ENCODE measurements at regions of chr16 and their contacts with region 1.

Region 1: GRCh38 chr16:23966597-23967394 is 131.0 kb downstream of the PRKCB start:
- DNase-seq: peak in 2 of 4 experiments; percentile 43 to 80
- ATAC-seq: peak; percentile 68
- H3K4me3 ChIP-seq: no peak overlapping the region
- H3K27ac ChIP-seq: peak overlapping the region; percentile 34; the same call in 1 of the 3 replicates
- H3K4me1 ChIP-seq: peaks cover 0 to 19% of the 10 kb centered on the region in 2 experiments; a peak in 4 of 5 replicates
- H3K27me3 ChIP-seq: no peaks in the 10 kb centered on the region
- CTCF ChIP-seq: peak in 1 of 3 experiments; percentile 17; a peak in 2 of 6 replicates
- EP300 ChIP-seq: no peak
- POLR2A ChIP-seq: no peak
- RAD21 ChIP-seq: 0 out of 4 replicates have a peak, but pooled peaks of 1 of the 2 experiments have one; percentile 28

Region 2: DNA sequence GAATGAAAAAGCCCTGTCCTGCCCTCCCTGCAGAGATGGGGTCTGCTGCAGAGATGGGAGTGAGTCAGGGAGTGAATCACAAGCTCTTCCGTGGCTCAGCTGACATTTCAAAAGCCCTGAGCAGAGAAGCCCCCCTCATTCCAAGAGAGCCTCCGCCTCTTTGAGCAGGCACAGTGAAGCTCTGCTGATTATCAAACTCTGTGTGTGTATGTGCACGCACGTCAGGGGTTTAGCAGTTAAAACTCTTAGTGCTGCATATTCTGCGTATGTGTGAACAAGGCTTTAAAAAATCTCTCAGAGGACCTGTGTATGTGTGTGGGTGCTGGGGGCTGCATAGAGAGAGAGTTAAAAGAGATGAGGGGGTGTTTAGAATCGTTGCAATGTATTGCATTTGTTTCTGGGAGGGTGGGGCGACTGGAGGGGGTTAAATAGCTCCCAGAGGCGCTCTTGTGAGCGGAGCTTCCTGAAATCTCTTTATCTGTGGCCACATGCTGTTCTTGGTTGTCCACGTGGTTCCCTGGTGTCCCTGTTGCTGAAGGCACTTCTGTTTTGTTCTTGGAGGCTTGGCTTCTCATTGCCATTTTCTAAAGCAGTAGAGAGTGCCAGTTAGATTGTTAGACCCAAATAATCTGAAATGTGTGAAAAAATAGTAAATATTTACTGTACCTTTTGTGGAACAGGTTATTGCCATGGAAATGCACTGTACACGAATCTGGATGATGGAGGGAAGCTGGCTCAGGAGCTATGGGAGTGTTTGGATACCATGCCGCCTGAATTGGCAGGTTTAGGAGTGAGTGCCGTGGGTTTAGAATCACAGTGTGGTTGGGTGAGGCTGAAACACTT is 14.4 kb before region 1 on chr16:
- CTCF ChIA-PET with region 1: no interaction called
- POLR2A ChIA-PET with region 1: interaction called, 33 read pairs
- in situ Hi-C with region 1: no loop called
- intact Hi-C with region 1: no loop called
- DNase-seq: peak; percentile 63 to 91 (median 78)
- ATAC-seq: peak; percentile 87
- H3K4me3 ChIP-seq: peak overlapping the region; percentile 15; the same call in 1 of the 2 replicates
- H3K27ac ChIP-seq: peak overlapping the region; percentile 85
- H3K4me1 ChIP-seq: peaks cover 12 to 61% of the 10 kb centered on the region in 2 experiments
- H3K27me3 ChIP-seq: no peaks in the 10 kb centered on the region
- CTCF ChIP-seq: peak in 1 of 3 experiments; percentile 2; a peak in 1 of 6 replicates
- EP300 ChIP-seq: peak; percentile 86
- POLR2A ChIP-seq: no peak
- RAD21 ChIP-seq: peak in 1 of 2 experiments; percentile 16; a peak in 3 of 4 replicates

Region 3: GRCh38 chr16:23979441-23979840 is 12.6 kb after region 1 on chr16:
- CTCF ChIA-PET with region 1: no interaction called
- POLR2A ChIA-PET with region 1: interaction called, 12 read pairs
- in situ Hi-C with region 1: no loop called
- intact Hi-C with region 1: no loop called
- DNase-seq: no peak
- ATAC-seq: no peak
- H3K4me3 ChIP-seq: no peak overlapping the region
- H3K27ac ChIP-seq: no peak overlapping the region
- H3K4me1 ChIP-seq: peaks cover 2 to 6% of the 10 kb centered on the region in 2 experiments; a peak in 2 of 5 replicates
- H3K27me3 ChIP-seq: no peaks in the 10 kb centered on the region
- CTCF ChIP-seq: no peak
- EP300 ChIP-seq: no peak
- POLR2A ChIP-seq: no peak
- RAD21 ChIP-seq: no peak